ENCODE measurements at regions of chr14 and their contacts with region 1.

Region 1: DNA sequence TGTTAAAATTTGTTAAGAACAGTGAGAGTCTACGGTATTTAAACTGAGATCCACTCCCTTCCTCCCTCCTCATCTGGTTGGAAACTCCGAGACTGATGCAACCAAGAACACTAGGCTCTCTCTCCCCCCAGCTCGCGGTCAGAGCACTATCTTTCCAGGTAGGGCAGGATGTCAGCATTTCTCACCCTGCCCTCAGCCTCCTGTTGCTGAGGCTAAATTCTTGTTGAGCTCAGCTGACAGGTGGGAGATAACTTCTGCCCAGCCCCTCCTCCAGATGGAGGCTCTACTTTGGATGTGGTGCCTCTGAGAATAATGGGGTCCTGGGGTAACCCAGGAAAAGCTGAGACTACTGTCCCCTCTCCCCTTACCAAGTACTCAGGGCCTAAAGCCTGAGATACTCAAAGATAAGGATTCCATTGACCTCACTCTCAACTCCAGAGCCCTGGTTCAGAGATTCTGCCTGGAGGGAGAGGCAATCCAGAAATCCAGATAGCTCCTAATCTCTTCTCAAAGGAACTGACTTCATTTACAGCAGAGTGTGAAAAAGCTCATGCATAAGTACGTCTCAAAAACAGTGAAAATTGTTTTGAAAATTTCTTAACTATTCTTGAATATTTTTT is 110.1 kb downstream of the EML5 start:
- DNase-seq: peak; percentile 65
- H3K4me3 ChIP-seq: no peak overlapping the region
- H3K27ac ChIP-seq: peak overlapping the region in 1 of 2 experiments; percentile 82; a peak in 2 of 4 replicates
- H3K4me1 ChIP-seq: peaks cover 0 to 14% of the 10 kb centered on the region in 2 experiments; a peak in 2 of 4 replicates
- H3K27me3 ChIP-seq: no peaks in the 10 kb centered on the region; the same call in 1 of the 2 replicates
- CTCF ChIP-seq: no peak
- EP300 ChIP-seq: peak in 1 of 2 experiments; percentile 69; a peak in 2 of 4 replicates
- RAD21 ChIP-seq: no peak

Region 2: DNA sequence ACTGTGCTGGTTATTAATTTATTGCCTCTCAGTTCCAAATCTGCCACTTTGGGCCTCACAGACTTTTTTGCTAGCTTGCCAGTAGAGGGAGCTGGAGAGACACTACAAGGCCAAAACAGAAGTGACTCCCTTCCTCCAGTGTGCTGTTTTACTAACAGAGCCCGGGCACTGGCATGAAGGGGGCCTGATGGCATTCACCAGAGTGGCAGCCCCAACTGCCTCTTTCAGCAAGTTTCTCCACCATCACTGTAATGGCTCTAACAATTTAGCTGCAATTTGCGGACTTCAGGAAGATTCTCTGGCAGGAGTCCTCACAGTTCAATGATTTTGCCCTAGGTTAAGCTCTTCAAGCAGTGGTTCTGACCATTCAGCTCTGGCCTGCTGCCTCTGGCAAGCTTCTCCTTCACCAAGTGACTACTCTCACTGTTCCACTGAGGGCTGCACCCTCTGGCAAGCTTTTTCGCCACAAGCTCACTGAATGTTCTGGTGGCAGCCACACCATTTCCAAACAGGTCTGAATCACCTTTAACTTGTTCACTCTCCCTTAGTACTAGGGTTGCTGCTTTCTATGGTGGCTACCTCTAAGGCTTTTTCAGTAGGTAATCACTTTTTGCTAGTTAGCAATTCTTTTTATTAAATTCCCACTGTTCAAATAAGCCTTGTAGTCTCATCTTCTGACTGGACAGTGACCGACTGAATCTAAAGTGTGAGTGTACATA is 14.9 kb before region 1 on chr14:
- CTCF ChIA-PET with region 1: interaction called, 45 read pairs
- POLR2A ChIA-PET with region 1: interaction called, 14 read pairs
- DNase-seq: peak; percentile 63
- H3K4me3 ChIP-seq: no peak overlapping the region; a peak in 1 of 4 replicates
- H3K27ac ChIP-seq: peak overlapping the region in 1 of 2 experiments; percentile 85; a peak in 2 of 4 replicates
- H3K4me1 ChIP-seq: peaks cover 0 to 24% of the 10 kb centered on the region in 2 experiments; a peak in 2 of 4 replicates
- H3K27me3 ChIP-seq: no peaks in the 10 kb centered on the region
- CTCF ChIP-seq: peak; percentile 90
- EP300 ChIP-seq: peak in 1 of 2 experiments; percentile 22; a peak in 1 of 4 replicates
- RAD21 ChIP-seq: peak; percentile 89